ENCODE measurements at regions of chr3 and their contacts with region 1.

Region 1: DNA sequence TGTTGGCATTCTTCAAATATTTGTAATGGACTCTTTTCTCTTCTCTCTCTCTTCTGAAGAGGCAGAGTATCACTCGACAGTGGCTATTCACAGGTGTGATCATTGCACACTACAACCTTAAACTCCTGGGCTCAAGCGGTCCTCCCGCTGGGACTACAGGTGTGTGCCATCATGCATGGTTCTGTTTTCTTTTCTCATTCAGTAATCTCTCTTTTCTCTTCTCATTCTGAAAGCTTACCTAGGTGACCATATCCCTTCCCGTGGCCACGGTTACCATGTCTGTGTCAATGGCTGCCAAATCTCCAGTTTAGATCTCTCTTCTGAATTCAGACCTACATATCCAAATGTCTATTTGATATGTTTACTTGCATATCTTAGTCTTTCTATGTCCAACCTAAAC is 96.3 kb downstream of the SOX2 start:
- DNase-seq: no peak
- H3K4me3 ChIP-seq: no peak overlapping the region
- CTCF ChIP-seq: no peak
- POLR2A ChIP-seq: no peak

Region 2: DNA sequence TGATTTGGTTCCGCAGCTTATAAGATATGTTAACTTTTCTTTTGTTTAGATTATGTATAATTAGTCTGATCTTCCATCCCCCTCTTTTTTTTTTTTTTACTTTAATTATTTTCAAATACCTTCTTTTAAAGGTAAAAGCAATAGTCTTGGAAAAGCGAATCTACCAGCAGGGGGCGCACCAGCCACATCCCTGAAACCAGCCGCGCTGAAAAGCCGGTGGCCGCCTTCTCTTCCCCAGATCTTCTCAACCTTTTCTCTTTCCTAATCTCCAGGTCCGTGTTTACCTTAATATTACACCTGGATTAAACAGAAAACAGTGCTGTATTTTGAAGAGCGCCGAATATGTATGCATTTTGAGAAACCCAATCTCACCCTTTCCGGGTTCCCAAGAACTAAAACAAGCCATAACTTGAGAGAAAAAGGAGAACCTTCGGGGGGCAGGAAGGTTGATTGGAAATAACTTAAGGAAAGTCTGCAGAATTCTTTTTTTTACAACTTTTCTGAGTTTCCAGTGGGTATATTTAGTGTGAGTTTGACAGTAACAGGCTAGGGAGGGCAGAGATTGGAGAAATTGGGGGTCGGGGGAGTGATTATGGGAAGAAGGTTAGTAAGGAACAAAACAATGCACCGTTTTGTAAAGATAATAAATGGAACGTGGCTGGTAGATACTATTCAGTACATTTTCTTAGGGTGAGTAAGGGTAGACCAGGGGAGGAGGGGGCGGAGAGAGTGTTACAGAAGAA is 98.3 kb before region 1 on chr3:
- intact Hi-C with region 1: no loop called
- DNase-seq: peak in 1 of 2 donors; percentile 64
- H3K4me3 ChIP-seq: no peak overlapping the region
- CTCF ChIP-seq: no peak
- POLR2A ChIP-seq: no peak

Region 3: DNA sequence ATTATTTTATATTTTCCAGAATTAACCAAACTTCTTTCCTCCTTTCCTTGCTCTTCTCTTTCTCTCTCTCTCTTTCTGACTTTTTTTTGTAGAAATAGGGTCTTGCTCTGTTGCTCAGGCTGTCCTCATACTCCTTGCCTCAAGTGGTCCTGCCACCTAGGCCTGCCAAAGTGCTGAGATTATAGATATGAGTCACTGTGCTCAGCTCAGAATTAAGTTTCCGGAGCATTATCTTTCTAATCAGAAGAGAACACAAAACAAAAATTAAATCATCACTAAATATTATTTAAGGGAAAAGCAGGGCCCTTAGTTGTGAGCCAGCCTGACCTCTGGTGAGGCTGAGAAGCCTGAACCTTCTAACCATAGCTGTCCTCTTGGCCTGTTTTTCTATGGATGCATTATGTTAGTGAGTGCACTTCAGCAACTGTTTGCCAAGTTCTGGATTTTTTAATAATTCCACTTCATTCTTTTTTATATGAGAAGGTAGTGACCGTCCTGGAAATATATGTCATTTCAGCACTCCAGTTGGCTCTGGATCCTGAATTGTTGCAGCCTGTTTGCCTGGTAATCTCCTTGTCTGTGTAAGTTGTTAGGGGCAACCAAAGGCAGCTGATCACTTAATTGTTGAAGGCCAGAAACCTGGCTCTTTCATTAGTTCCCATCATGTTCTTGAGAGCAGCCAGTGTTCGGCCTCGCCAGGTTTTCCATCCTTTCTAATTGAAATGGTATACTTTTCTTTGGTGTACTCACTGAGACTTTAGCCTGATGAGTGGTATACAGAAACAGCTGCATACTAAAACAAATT is 72.1 kb after region 1 on chr3:
- intact Hi-C with region 1: loop called (anchors 2 kb)
- DNase-seq: peak in 1 of 2 donors; percentile 3
- H3K4me3 ChIP-seq: no peak overlapping the region
- CTCF ChIP-seq: no peak
- POLR2A ChIP-seq: no peak

Region 4: GRCh38 chr3:181999314-181999713 is 191.3 kb after region 1 on chr3:
- intact Hi-C with region 1: no loop called
- DNase-seq: no peak
- H3K4me3 ChIP-seq: no peak overlapping the region
- CTCF ChIP-seq: no peak
- POLR2A ChIP-seq: no peak